H1 (cell line): ENCODE measurements at regions of chr12 and their contacts with region 1.

Region 1: DNA sequence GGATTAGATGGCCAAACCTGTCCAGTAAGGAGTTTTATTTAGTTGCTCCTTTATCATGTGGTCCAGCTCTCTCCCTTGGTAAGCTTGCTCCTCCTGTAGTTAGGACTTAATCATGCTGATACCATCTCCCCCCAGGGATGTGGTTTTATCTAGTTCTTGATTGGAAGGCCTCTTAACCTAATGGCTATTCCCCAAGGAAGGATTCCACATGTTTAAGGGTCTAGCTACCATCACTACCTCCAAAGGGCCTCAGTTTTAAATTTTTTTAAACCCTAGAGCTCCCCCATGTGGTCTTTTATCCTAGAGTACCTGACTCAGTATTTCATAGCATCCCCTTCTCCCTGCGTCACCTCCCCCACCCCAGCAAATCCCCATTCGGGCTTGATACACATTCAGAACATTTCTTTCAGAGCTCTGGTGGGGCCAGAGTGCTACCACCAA is 22.5 kb downstream of the MAP3K12 start:
- DNase-seq: no peak
- H3K4me3 ChIP-seq: no peak overlapping the region
- H3K27ac ChIP-seq: no peak overlapping the region
- H3K4me1 ChIP-seq: peaks cover 0 to 9% (median 1%) of the 10 kb centered on the region in 4 experiments; a peak in 3 of 7 replicates
- H3K27me3 ChIP-seq: no peaks in the 10 kb centered on the region
- CTCF ChIP-seq: peak in 2 of 3 experiments; percentile 37 to 47; a peak in 2 of 4 replicates
- EP300 ChIP-seq: no peak
- POLR2A ChIP-seq: peak; percentile 42 to 71; a peak in 2 of 3 replicates
- RAD21 ChIP-seq: peak in 1 of 2 experiments; percentile 35; a peak in 1 of 4 replicates

Region 2: GRCh38 chr12:53344824-53345485 is 131.8 kb before region 1 on chr12:
- CTCF ChIA-PET with region 1: interaction called, 11 read pairs
- POLR2A ChIA-PET with region 1: interaction called, 12 read pairs
- DNase-seq: peak in 1 of 2 experiments; percentile 78
- H3K4me3 ChIP-seq: peak overlapping the region; percentile 37 to 80 (median 72)
- H3K27ac ChIP-seq: no peak overlapping the region
- H3K4me1 ChIP-seq: peaks cover 0 to 15% (median 8%) of the 10 kb centered on the region in 4 experiments; a peak in 5 of 7 replicates
- H3K27me3 ChIP-seq: peaks cover 3 to 13% (median 8%) of the 10 kb centered on the region in 4 experiments; a peak in 4 of 7 replicates
- CTCF ChIP-seq: peak in 2 of 3 experiments; percentile 12 to 24; a peak in 2 of 4 replicates
- EP300 ChIP-seq: no peak
- POLR2A ChIP-seq: 0 out of 3 replicates have a peak, but pooled peaks of 1 of the 2 experiments have one; percentile 32
- RAD21 ChIP-seq: peak in 1 of 2 experiments; percentile 35; a peak in 2 of 4 replicates

Region 3: DNA sequence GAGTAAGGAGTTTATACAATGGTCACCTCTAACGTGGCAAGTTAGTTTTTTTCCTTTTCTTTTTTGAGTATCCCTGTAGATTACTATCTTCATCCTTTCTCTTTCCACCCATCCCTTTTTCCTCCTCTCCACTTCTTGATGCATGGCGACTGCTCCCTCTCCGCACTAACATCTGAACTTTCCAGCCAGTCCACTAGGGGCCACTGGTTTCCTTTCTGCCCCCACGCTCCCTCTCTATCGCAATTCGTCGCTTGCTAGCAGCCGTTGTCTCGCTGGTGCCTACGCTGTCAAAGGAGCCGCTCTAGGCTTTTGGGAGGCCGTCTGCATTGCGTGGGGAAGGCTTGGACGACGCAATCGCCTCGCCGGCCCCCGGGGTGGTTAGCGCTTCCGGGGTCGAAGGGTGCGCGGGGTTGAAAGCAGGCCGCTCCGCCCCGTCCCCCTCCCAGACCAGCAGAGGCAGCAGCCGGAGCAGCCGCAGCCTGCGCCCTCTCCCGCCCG is 25.1 kb before region 1 on chr12 and contains the start of gene PCBP2:
- CTCF ChIA-PET with region 1: interaction called, 24 read pairs
- POLR2A ChIA-PET with region 1: interaction called, 3,397 read pairs
- DNase-seq: peak; percentile 92 to 98
- H3K4me3 ChIP-seq: peak within 1 kb of the TSS; percentile 89 to 99 (median 94)
- H3K27ac ChIP-seq: peak within 1 kb of the TSS; percentile 96
- H3K4me1 ChIP-seq: peaks cover 0 to 8% (median 1%) of the 10 kb centered on the region in 4 experiments; a peak in 3 of 7 replicates
- H3K27me3 ChIP-seq: no peaks in the 10 kb centered on the region
- CTCF ChIP-seq: peak; percentile 72 to 94 (median 85)
- EP300 ChIP-seq: peak in 1 of 2 experiments; percentile 86; a peak in 1 of 3 replicates
- POLR2A ChIP-seq: peak; percentile 91
- RAD21 ChIP-seq: no peak; a peak in 1 of 4 replicates
- total RNA-seq, gene PCBP2: 1,114 and 1,123 TPM in 2 replicates

Region 4: DNA sequence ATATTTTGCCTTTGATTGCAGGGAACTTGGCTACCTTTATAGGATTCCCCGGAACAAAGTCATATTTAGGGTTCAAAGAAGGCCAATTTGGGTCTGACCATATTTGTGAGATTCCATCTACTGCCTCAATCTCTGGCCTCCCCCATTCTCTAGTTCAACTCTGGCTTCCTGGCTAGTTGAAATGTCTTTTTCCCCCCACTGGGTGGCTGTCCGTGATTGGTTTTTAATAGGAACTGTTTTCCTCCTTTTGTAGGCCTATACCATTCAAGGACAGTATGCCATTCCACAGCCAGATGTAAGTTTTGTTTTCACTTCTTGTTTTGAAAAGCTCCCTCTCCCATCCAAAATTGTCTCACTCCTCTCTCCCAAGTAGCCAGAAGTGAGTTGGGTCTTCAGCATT is 11.1 kb before region 1 on chr12:
- CTCF ChIA-PET with region 1: interaction called, 57 read pairs
- POLR2A ChIA-PET with region 1: interaction called, 3,397 read pairs
- DNase-seq: no peak
- H3K4me3 ChIP-seq: no peak overlapping the region
- H3K27ac ChIP-seq: no peak overlapping the region
- H3K4me1 ChIP-seq: peaks cover 0 to 10% (median 0%) of the 10 kb centered on the region in 4 experiments; a peak in 2 of 7 replicates
- H3K27me3 ChIP-seq: no peaks in the 10 kb centered on the region
- CTCF ChIP-seq: no peak
- EP300 ChIP-seq: no peak
- POLR2A ChIP-seq: no peak; a peak in 1 of 3 replicates
- RAD21 ChIP-seq: no peak

Region 5: GRCh38 chr12:53492830-53493611 is 16.2 kb after region 1 on chr12:
- CTCF ChIA-PET with region 1: interaction called, 48 read pairs
- POLR2A ChIA-PET with region 1: interaction called, 3,397 read pairs
- DNase-seq: peak; percentile 86 to 96
- H3K4me3 ChIP-seq: peak overlapping the region; percentile 54 to 65 (median 57)
- H3K27ac ChIP-seq: peak overlapping the region; percentile 55; the same call in 1 of the 2 replicates
- H3K4me1 ChIP-seq: peaks cover 11 to 37% (median 15%) of the 10 kb centered on the region in 4 experiments
- H3K27me3 ChIP-seq: no peaks in the 10 kb centered on the region
- CTCF ChIP-seq: no peak
- EP300 ChIP-seq: no peak; a peak in 1 of 3 replicates
- POLR2A ChIP-seq: peak in 1 of 2 experiments; percentile 76; a peak in 2 of 3 replicates
- RAD21 ChIP-seq: no peak

Region 6: DNA sequence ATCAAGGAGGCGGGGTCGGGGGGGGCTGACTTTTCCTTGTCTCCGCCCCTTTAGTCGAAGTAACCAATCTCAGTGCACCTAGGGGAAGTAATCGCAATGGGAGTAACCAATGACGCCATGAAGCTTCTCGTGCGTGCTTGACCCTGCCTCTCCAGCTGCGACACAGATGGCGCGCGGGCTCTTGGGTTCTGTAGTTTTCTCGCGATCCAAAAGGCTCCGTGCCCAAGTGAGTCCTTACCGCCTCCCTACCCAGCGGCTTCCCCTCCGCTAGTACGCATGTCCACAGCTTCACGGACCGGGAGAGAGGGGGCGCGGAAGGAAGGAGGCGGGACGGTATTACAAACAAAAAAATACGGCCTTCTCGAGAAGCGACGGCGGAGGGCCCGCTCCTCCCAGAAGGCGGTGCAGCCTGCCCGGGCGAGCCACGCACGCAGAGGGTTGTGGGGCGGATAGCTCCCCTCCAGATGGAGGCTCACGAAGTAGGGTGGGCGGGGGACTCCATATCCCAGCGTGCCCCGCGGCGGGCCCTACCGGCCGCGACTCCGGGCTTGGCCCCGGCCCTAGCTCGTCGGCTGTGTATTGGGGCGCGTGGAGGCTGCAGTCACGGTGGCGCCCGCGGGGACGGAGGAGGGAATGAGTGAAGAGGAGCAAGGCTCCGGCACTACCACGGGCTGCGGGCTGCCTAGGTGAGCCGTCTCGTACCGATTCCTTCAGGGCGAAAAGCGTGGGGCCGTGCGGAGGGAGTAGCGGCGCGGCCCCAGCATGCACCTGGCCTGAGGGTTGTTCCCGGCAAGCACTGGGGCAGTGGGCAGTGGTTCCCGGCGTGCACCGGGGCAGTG is 24.2 kb after region 1 on chr12 and contains the start of gene TARBP2:
- CTCF ChIA-PET with region 1: interaction called, 41 read pairs
- POLR2A ChIA-PET with region 1: interaction called, 3,397 read pairs
- DNase-seq: peak; percentile 95 to 97
- H3K4me3 ChIP-seq: peak within 1 kb of the TSS; percentile 55 to 91 (median 77)
- H3K27ac ChIP-seq: peak within 1 kb of the TSS; percentile 91
- H3K4me1 ChIP-seq: peaks cover 9 to 41% (median 20%) of the 10 kb centered on the region in 4 experiments
- H3K27me3 ChIP-seq: no peaks in the 10 kb centered on the region
- CTCF ChIP-seq: no peak
- EP300 ChIP-seq: 0 out of 3 replicates have a peak, but pooled peaks of 1 of the 2 experiments have one; percentile 12
- POLR2A ChIP-seq: peak; percentile 66 to 86
- RAD21 ChIP-seq: no peak
- total RNA-seq, gene TARBP2: 66.1 and 69.9 TPM in 2 replicates

Region 7: DNA sequence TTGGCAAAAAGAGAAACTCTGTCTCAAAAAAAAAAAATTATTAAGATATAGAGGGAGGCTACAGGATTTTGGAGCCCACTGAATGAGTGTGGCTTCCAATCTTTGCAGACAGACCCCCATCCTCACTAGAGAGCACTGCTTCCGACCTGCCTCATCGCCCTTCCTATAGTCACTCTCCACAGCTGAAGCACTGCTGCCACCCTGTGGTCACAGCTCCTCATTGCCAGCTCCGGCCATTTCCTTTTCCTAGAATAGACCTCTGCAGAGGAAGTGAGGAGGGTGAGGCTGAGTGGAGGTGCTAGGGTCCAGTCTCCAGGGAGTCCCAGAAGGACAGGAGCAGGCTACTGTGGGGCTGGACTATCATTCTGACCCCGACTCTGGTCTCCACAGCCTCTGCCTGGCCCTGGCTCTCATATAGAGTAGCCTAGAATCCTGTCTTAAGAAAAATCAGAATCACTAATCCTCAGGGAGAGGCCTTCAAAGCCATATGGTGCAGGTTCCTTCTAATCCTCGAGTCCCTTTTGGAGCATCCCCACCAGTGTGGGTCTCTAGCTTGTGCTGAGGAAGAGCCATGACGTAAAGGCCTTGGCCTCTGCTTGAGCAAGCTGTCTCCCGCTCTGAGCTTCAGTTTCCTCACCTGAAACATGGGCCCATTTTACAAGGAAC is 31.9 kb after region 1 on chr12:
- CTCF ChIA-PET with region 1: interaction called, 105 read pairs
- POLR2A ChIA-PET with region 1: interaction called, 3,397 read pairs
- DNase-seq: peak; percentile 77 to 97
- H3K4me3 ChIP-seq: no peak overlapping the region
- H3K27ac ChIP-seq: no peak overlapping the region
- H3K4me1 ChIP-seq: no peaks in the 10 kb centered on the region
- H3K27me3 ChIP-seq: no peaks in the 10 kb centered on the region
- CTCF ChIP-seq: peak; percentile 94 to 99 (median 98)
- EP300 ChIP-seq: no peak
- POLR2A ChIP-seq: no peak
- RAD21 ChIP-seq: peak; percentile 99